Activated naive CD8-positive, alpha-beta T cell treated with anti-CD3 and anti-CD28 coated beads, Interleukin-2, amount 10 ng/mL, durations not matched to agents 7 days and 5 days (primary cell): ENCODE measurements at regions of chr14 and their contacts with region 1.

Region 1: DNA sequence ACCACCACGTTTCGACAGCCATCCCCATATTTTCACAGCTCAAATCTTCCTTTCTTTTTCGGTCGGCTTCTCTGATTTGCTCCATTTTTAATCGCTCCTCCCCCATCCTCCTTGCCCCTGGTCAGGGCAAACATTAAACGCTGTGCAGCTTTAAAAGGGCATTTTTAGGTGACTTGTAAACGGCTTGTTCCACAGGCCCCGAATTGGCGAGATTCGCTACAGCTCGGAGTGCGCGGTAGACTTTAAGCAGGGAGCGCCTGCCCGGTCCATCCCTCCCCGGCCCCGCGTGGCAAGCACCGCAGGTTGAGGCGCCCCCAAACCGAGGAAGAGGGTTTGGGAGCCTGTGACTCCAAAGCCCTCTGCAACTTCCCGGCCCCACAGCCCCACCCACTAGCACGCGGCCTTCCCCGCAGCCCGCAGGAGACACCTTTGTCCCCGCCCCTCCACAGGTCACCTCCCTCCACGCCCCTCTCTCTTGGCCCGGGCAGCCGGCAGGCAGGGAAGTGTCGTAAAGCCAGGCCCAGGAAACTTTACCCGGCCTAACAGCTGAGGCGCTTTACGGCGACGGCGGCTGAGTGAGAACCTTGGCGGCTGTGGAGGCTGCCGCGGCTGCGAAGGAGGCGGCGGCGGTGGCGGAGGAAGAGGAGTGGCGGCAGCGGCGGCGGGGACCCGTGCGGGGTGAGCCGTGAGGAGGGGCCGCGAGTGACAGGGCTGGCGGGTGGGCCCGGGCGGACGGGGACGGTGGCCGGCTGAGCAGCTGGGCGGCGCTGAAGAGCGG is at the start of gene NAA30:
- DNase-seq: peak; percentile 88
- ATAC-seq: peak; percentile 89
- H3K4me3 Mint-ChIP-seq: peak within 1 kb of the TSS; percentile 83
- H3K27ac Mint-ChIP-seq: peak within 1 kb of the TSS; percentile 91
- H3K4me1 Mint-ChIP-seq: peaks cover 30% of the 10 kb centered on the region
- H3K27me3 Mint-ChIP-seq: peaks cover 4% of the 10 kb centered on the region
- total RNA-seq, gene NAA30: 14.3 to 15.2 TPM

Region 2: DNA sequence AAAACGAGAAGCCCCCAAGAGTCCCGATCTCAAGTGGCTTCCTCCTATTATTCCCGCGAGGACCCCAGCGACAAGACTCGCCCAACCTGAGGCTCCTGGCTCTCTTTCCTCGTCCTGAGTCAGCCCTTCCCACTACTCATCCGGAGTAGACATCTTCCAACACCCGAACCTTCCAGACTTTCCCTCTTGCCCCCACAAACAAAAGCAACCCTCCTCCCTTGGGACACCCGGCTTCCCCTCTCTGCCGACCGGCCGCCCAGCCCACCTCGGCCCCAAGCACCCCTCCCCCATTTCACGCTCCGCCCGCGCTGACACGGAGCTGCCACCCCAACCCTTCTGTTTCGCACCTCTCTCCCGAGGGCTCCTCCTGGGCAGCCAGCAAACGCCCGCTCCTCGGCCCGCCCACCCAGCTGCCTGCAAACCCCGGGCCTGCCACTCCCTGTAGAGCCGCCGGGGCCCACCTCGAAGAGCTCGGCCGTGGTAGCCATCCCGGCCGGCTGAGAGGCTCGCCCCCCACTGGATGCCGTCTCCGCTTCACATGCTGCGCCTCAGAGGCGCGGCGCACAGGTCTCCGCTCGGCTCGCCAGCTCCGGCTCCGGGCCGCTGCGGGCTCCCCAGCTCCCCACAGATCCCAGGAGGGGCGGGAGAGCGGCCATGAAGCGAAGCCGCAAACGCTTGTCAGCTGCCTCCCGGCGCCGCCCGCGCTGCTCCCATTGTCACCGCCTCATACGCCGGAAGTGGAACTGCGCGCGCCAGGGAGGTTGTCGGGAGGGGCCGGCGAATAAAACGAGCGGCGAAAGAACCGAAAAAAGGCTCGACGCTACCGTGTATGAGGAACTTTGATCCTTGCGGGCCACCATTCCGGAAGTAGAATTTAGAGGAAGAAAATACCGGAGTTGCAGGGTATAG is 121.8 kb before region 1 on chr14 and contains the starts of genes AP5M1 and EXOC5:
- POLR2A ChIA-PET with region 1: interaction called, 11 read pairs
- DNase-seq: peak; percentile 91
- ATAC-seq: peak; percentile 91
- H3K4me3 Mint-ChIP-seq: peak within 1 kb of the TSS; percentile 98
- H3K27ac Mint-ChIP-seq: peak within 1 kb of the TSS; percentile 99
- H3K4me1 Mint-ChIP-seq: peaks cover 41% of the 10 kb centered on the region
- H3K27me3 Mint-ChIP-seq: no peaks in the 10 kb centered on the region
- total RNA-seq, gene AP5M1: 50.2 to 50.6 TPM
- total RNA-seq, gene EXOC5: 56.9 to 61.7 TPM

Region 3: DNA sequence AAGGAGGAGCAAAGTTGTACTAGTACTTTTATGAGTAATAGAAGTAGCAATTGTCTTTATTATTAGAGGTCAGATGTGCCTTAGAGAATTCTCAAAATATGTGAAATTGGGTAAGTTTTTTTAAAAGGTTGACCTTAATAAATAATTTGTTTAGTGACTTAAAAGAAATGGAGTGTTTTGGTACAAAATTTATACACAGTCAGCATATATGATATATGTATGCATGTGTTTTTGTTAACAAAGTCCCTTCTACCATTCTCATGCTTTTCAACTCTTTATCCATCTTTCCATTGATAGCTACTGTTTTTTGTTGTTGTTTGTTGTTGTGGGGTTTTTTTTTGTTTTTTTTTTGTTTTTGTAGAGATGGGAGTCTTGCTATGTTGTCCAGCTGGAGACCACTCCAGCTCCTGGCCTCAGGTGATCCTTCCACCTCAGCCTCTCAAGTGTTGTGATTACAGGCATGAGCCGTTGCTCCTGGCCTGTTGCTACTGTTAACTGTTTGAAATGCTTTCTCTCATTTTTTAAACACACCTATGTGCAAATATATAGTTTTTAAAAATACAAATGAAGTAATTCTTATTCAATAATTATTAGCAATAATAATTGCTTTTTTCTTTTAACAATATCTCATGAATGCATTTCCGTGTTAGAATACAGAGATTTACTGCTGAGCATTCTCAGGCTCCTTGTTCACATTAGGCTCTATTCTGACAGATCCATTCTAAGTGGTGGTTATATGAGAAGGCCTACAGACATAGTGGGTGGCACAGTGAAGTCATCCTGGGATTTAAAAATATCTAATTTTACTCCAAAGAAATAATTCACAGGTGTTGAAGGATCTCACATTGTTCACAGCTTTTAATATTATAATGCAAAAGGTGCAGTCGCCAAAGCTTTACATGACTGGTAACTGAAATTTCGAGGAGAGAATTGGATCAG is 10.6 kb after region 1 on chr14:
- POLR2A ChIA-PET with region 1: interaction called, 10 read pairs
- DNase-seq: no peak
- ATAC-seq: no peak
- H3K4me3 Mint-ChIP-seq: no peak overlapping the region
- H3K27ac Mint-ChIP-seq: no peak overlapping the region
- H3K4me1 Mint-ChIP-seq: peaks cover 12% of the 10 kb centered on the region
- H3K27me3 Mint-ChIP-seq: no peaks in the 10 kb centered on the region

Region 4: GRCh38 chr14:57533214-57533613 is 143.0 kb after region 1 on chr14:
- POLR2A ChIA-PET with region 1: no interaction called
- DNase-seq: no peak
- ATAC-seq: no peak
- H3K4me3 Mint-ChIP-seq: no peak overlapping the region
- H3K27ac Mint-ChIP-seq: no peak overlapping the region
- H3K4me1 Mint-ChIP-seq: no peaks in the 10 kb centered on the region
- H3K27me3 Mint-ChIP-seq: peaks cover 4% of the 10 kb centered on the region